ENCODE measurements at regions of chr14 and their contacts with region 1.

Region 1: DNA sequence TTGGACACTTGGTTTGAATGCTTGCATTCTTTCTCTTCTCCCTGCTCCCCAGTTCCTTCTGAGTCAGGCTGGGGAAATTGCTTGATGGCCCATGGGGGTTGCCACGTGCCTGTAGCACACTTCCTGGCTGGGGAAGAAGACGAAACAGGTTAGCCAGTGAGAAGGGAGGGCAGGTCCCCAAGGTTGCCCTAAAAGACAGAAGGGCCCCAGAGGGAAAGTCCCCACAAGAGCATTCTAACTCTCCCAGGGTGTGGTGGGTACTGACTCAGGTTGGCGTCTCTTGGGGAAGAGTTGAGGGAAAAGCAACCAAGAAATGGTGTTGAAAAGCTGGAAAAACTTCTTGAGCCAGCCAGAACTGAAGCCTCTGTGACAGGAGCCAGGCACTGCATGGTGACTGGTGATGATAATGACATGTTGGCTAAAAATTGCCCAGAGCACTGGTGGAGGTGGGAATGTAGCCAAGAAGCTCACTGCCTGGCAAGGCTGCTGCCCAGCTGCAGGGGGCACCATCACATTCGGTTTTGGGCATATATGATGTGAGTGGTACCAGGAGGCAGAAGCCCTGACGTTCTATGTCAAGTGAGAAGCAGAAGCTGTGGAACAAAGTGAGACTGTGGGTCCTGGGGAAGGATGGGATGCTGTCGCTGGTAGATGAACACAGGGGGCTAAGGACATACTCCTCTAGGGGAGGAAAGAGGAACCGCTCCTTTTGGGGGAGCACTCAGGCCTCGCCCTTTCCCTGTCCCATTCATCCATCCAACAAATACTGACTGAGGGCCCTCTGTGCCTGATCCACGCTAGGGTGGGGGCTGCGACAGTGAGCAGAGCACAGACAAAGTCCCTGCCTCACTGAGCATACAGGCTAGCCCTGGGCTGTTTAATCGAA is 8.1 kb upstream of the RABGGTA start:
- DNase-seq: peak; percentile 64
- ATAC-seq: peak; percentile 88
- H3K4me3 ChIP-seq: no peak overlapping the region; the same call in 1 of the 2 replicates
- H3K27ac ChIP-seq: peak overlapping the region; percentile 53
- H3K4me1 ChIP-seq: peaks cover 43% of the 10 kb centered on the region
- H3K27me3 ChIP-seq: no peaks in the 10 kb centered on the region
- CTCF ChIP-seq: peak; percentile 44 to 47 (median 44); a peak in 5 of 6 replicates
- EP300 ChIP-seq: 0 out of 4 replicates have a peak, but pooled peaks of 1 of the 2 experiments have one; percentile 4
- POLR2A ChIP-seq: no peak
- RAD21 ChIP-seq: 0 out of 2 replicates have a peak, but pooled peaks have one; percentile 29

Region 2: DNA sequence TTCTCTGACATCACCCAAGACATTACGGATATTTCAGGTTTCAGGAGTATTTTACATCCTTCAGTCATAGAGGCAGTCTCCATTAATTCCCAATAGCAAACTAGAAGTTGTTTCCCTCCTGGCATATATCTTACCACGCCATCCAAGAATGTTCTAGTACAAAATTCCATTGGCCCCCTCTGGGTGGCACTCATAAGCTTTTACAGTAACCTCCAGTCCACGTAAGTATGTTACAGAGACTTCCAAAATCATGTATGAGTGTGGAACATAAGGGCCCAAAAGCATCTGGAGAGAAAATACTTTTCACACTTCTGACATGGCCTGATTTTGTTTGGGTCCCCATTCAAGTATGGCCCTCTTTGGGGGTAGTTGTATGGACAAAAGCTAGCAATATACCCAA is 384.1 kb before region 1 on chr14:
- CTCF ChIA-PET with region 1: no interaction called
- POLR2A ChIA-PET with region 1: no interaction called
- RAD21 ChIA-PET with region 1: no interaction called
- SMC1A ChIA-PET with region 1: no interaction called
- in situ Hi-C with region 1: no loop called
- intact Hi-C with region 1: no loop called
- DNase-seq: no peak
- ATAC-seq: peak; percentile 45; the same call in 1 of the 3 replicates
- H3K4me3 ChIP-seq: no peak overlapping the region
- H3K27ac ChIP-seq: no peak overlapping the region
- H3K4me1 ChIP-seq: no peaks in the 10 kb centered on the region
- H3K27me3 ChIP-seq: no peaks in the 10 kb centered on the region; a peak in 1 of 4 replicates
- CTCF ChIP-seq: peak in 2 of 3 experiments; percentile 22 to 29; a peak in 2 of 6 replicates
- EP300 ChIP-seq: no peak
- POLR2A ChIP-seq: no peak
- RAD21 ChIP-seq: 0 out of 2 replicates have a peak, but pooled peaks have one; percentile 26

Region 3: DNA sequence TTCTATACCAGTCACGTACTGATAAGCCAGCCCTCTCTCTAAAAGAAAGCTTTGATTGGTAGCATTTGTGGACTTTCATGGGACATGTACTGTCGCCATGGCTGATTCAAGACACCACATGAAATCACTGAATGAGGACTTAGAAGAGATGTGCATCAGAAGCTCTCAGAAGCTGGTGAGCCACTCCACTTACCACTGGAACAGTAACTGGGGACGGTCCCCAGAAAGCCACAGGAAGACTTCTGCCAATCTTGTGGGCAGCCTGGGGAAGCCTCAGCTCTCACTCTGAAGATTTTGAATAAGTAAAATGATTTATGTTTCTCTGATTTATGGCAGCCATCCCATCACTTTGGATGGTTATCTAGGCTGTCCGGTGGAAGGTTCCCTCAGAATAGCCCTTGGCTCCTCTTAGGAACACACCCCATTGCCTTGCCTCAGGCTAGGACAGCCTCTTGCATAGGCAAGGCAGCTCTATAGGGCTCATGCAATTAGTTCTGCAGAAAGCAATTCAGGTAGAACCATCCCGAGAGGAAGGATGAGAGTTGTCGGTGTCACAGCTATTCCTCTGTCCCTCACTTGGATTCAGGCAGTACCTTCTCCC is 10.2 kb after region 1 on chr14:
- CTCF ChIA-PET with region 1: interaction called, 269 read pairs
- POLR2A ChIA-PET with region 1: interaction called, 9 read pairs
- RAD21 ChIA-PET with region 1: interaction called, 14 read pairs
- SMC1A ChIA-PET with region 1: interaction called, 115 read pairs
- in situ Hi-C with region 1: no loop called
- intact Hi-C with region 1: no loop called
- DNase-seq: no peak
- ATAC-seq: peak; percentile 95
- H3K4me3 ChIP-seq: no peak overlapping the region
- H3K27ac ChIP-seq: 0 out of 2 replicates have a peak overlapping the region, but pooled peaks have one; percentile 24
- H3K4me1 ChIP-seq: peaks cover 11% of the 10 kb centered on the region
- H3K27me3 ChIP-seq: no peaks in the 10 kb centered on the region
- CTCF ChIP-seq: no peak
- EP300 ChIP-seq: no peak
- POLR2A ChIP-seq: no peak
- RAD21 ChIP-seq: no peak